Pancreas (tissue), 10 donors: ENCODE measurements at regions of chr1 and their contacts with region 1.

Region 1: GRCh38 chr1:235415008-235415904 is 48.0 kb downstream of the TBCE start:
- DNase-seq: peak; percentile 48 to 75 (median 58)
- ATAC-seq: peak; percentile 78 to 93 (median 91)
- H3K4me3 ChIP-seq: no peak overlapping the region
- H3K27ac ChIP-seq: no peak overlapping the region
- H3K4me1 ChIP-seq: no peaks in the 10 kb centered on the region
- H3K27me3 ChIP-seq: no peaks in the 10 kb centered on the region
- CTCF ChIP-seq: peak in 3 of 4 donors; percentile 60 to 85 (median 65)

Region 2: GRCh38 chr1:235100194-235100772 is 315.0 kb before region 1 on chr1:
- intact Hi-C with region 1: loop called in 1 of 3 experiments (anchors 5 kb)
- DNase-seq: no peak
- ATAC-seq: no peak
- H3K4me3 ChIP-seq: no peak overlapping the region
- H3K27ac ChIP-seq: no peak overlapping the region
- H3K4me1 ChIP-seq: no peaks in the 10 kb centered on the region
- H3K27me3 ChIP-seq: no peaks in the 10 kb centered on the region
- CTCF ChIP-seq: no peak

Region 3: DNA sequence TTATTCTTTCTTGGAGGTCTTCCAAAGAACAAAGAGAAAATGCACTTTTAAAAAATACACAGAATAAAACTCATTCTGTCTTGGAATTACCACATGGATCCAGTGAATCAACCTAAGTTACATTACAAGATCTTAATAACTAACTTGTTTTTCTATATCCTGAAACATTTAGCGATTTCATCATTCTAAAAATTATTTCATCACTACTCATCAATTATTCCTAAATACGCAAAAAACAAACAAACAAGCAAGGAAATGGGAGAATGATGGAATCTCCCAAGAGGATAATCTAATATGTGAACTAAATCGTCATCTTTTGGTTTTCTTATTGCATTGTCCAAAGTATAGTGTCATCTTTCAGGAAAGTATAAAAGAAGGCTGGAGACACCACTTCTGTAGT is 272.8 kb after region 1 on chr1:
- intact Hi-C with region 1: no loop called
- DNase-seq: no peak
- ATAC-seq: no peak
- H3K4me3 ChIP-seq: no peak overlapping the region
- H3K27ac ChIP-seq: no peak overlapping the region
- H3K4me1 ChIP-seq: peaks cover 0 to 3% (median 0%) of the 10 kb centered on the region in 3 donors
- H3K27me3 ChIP-seq: no peaks in the 10 kb centered on the region
- CTCF ChIP-seq: no peak